ENCODE measurements at regions of chr11 and their contacts with region 1.

Region 1: DNA sequence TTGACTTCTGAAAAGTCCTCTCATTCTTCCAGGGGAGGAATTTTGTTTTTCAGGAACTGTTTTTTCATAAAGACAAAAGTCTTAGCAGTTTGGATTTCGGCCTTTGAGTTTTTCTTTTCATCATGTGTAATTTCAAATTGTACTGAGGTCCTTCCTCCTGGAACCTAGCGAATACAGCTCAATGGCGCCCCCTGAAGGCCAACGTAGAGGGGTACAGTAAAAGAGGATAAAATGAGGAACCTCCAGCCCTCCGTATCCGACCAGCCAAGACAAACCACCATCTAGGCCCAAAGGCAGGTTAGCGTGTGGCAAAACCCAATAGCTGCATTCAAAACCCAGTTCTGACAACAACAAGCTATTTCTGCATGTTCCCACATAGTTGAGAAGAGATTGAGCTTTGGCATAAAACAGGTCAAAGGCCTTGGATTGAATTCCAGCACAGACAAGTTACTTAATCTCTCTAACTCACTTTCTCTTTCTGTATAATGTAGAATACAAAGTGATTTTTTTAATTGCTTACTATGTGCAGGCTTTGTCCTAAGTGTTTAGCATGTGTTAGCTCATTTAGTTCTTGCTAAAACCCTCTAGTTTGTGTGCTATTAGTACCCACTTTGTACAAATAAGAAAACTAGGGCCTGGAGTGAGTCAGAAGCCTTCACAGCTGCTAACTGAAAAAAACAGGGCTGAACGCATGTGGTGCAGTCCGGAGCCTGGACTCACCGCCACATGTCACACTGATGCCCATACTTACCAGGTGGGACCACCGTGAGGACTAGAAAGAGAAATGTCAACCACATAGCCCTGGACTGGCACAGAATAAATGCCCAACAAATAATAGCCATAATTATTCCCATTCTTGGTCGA is 43.2 kb upstream of the ETS1 start:
- DNase-seq: peak; percentile 94
- H3K4me3 ChIP-seq: no peak overlapping the region
- H3K27ac ChIP-seq: peak overlapping the region in 2 of 4 donors; percentile 3 to 35
- H3K4me1 ChIP-seq: peaks cover 0 to 12% (median 3%) of the 10 kb centered on the region in 4 donors
- H3K27me3 ChIP-seq: no peaks in the 10 kb centered on the region
- CTCF ChIP-seq: peak; percentile 74 to 92 (median 87)
- EP300 ChIP-seq: no peak
- POLR2A ChIP-seq: no peak

Region 2: DNA sequence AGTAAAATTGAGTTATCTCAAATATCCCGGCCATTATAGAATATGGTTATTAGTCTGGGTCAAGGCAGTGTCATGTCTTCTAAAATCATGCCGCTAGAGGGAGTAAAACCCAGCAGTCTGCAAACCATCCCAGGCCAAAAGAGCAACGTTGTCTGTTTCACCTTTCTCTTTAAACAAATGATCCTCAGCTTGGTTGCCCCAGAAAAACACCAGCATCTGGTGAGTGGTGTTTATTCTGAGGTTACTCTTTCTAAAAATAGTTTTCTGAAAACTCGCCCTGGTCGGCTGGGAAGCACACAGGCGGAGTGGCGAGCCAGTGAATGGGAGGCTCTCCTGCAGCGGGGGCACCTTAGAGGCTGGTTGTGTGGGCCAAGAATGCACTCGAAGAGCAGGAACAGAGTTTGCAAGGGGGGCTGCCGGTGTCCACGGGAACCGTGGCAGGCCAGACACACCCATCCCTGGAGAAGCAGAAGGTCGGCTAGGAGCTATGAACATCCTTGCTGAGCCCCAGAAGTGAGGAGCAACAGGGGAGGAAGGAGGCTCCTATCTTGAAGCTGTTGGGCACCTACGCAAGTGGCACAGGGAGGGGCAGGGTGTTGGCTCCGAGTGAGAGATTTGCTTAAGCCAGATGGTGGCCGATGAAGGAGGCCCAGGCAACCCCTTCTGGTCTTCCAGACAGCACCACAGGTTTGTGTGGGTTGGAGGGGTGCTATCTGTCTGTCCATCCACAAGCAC is 340.3 kb before region 1 on chr11:
- intact Hi-C with region 1: loop called (anchors 1 kb)
- DNase-seq: peak; percentile 78
- H3K4me3 ChIP-seq: peak overlapping the region in 2 of 4 donors; percentile 22 to 25
- H3K27ac ChIP-seq: peak overlapping the region; percentile 30 to 68 (median 54)
- H3K4me1 ChIP-seq: peaks cover 0 to 21% (median 15%) of the 10 kb centered on the region in 4 donors
- H3K27me3 ChIP-seq: no peaks in the 10 kb centered on the region
- CTCF ChIP-seq: peak; percentile 80 to 85 (median 84)
- EP300 ChIP-seq: no peak
- POLR2A ChIP-seq: no peak

Region 3: GRCh38 chr11:128709402-128709801 is 78.8 kb after region 1 on chr11:
- intact Hi-C with region 1: no loop called
- DNase-seq: no peak
- H3K4me3 ChIP-seq: no peak overlapping the region
- H3K27ac ChIP-seq: peak overlapping the region in 1 of 4 donors; percentile 41
- H3K4me1 ChIP-seq: no peaks in the 10 kb centered on the region
- H3K27me3 ChIP-seq: no peaks in the 10 kb centered on the region
- CTCF ChIP-seq: no peak
- EP300 ChIP-seq: peak in 1 of 4 donors; percentile 45
- POLR2A ChIP-seq: no peak

Region 4: GRCh38 chr11:128981254-128981653 is 350.7 kb after region 1 on chr11:
- intact Hi-C with region 1: no loop called
- DNase-seq: no peak
- H3K4me3 ChIP-seq: no peak overlapping the region
- H3K27ac ChIP-seq: no peak overlapping the region
- H3K4me1 ChIP-seq: no peaks in the 10 kb centered on the region
- H3K27me3 ChIP-seq: no peaks in the 10 kb centered on the region
- CTCF ChIP-seq: no peak
- EP300 ChIP-seq: no peak
- POLR2A ChIP-seq: no peak